Motor neuron (in vitro differentiated cells): ENCODE measurements at regions of chr9 and their contacts with region 1.

Region 1: DNA sequence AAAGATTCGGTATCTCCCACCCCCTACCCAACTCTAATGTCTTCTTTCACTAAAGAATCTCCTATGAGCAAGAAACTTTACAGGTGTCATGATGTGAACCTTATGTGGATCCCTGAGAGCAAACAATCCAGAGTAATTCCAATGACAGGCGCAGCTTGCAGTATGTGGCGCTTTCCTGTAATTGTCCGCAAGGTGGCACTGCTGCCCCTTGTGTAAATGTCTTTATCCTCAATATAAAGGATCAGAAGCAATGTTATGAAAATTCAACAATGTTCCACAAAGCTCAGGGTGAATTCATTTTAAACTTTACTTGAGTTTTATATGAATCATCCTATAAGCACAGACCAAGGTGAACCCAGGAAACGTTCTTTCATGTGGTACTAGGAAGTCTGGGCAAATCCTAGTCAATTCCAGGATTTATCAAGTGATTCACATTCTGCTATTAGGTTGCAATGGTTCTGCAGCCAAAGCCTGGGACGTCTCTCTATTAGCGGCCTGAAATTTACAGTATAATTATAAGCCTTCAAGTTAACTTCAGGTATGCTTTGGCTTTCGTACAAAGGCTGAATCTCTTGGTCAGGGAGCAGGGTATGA is 113.7 kb downstream of the TRPM6 start:
- ATAC-seq: peak; percentile 56 to 83 (median 74)
- H3K4me3 ChIP-seq: no peak overlapping the region
- H3K27ac ChIP-seq: no peak overlapping the region
- H3K4me1 ChIP-seq: no peaks in the 10 kb centered on the region

Region 2: DNA sequence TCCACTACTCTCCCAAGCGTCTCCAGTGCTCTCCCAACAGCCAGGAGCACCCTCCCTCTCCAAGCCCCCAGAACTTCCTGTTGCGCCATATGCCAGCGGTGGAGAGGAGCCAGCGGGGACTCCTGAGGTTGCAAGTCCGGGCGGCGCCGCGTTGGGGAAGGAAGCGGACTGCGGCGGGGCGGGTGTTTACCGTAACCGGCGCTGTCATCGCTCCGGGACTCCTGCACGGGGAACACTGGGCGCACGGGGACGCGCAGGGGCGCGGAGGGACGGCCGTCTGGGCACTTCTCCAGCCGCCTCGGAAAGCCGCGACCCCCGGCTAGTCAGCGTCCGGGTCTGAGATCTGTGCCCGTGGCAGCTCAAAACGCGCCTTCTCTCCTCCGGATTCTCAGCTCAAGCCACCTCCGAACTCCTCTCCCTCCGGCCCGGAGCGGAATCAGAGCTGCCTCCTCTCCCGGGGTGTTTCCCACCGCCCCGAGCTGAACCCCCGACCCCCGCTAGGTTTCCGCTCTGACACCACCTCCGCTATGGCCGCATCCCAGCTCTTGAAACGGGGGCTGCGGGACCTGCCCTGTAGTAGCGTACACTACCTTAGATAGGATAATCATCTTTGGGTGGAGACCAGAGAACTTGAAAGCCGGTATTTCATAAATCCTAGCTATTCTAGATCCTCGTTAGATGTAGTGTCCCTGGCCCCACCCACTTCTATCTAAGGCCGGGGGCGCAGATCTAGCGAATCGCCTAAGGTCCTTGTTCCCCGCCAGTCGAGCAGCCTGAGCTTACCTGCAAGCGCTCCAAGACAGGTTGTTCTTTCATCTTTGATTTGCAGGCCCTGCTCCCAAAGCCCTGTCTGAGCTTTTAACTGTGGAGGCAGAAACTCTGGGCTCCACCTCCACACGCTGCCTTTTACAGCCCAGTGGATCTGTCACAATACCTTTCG is 113.3 kb after region 1 on chr9 and contains the start of gene TRPM6:
- in situ Hi-C with region 1: loop called in 1 of 9 experiments (anchors 25 kb)
- ATAC-seq: peak; percentile 82 to 96 (median 94)
- H3K4me3 ChIP-seq: peak within 1 kb of the TSS; percentile 37 to 50 (median 47)
- H3K27ac ChIP-seq: no peak within 1 kb of the TSS
- H3K4me1 ChIP-seq: no peaks in the 10 kb centered on the region
- total RNA-seq, gene TRPM6: 0.05 to 1.7 (median 0.43) TPM

Region 3: GRCh38 chr9:74920944-74921626 is 147.1 kb after region 1 on chr9:
- in situ Hi-C with region 1: loop called in 1 of 9 experiments (anchors 25 kb)
- ATAC-seq: no peak
- H3K4me3 ChIP-seq: no peak overlapping the region
- H3K27ac ChIP-seq: no peak overlapping the region
- H3K4me1 ChIP-seq: no peaks in the 10 kb centered on the region

Region 4: GRCh38 chr9:75001719-75002422 is 227.9 kb after region 1 on chr9:
- in situ Hi-C with region 1: loop called in 5 of 9 experiments (anchors 10 to 25 kb)
- ATAC-seq: peak; percentile 60 to 99 (median 86)
- H3K4me3 ChIP-seq: no peak overlapping the region
- H3K27ac ChIP-seq: no peak overlapping the region
- H3K4me1 ChIP-seq: no peaks in the 10 kb centered on the region

Region 5: GRCh38 chr9:75071530-75072124 is 297.6 kb after region 1 on chr9:
- in situ Hi-C with region 1: loop called in 5 of 9 experiments (anchors 5 to 25 kb)
- ATAC-seq: no peak
- H3K4me3 ChIP-seq: no peak overlapping the region
- H3K27ac ChIP-seq: no peak overlapping the region
- H3K4me1 ChIP-seq: peaks cover 0 to 7% of the 10 kb centered on the region in 2 donors